Activated CD4-positive, alpha-beta T cell treated with anti-CD3 and anti-CD28 coated beads for 36 hours (primary cell): ENCODE measurements at regions of chr1 and their contacts with region 1.

Region 1: GRCh38 chr1:167599957-167600581 is 30.0 kb upstream of the RCSD1 start:
- DNase-seq: peak; percentile 63
- ATAC-seq: peak; percentile 88
- H3K4me3 Mint-ChIP-seq: peak overlapping the region; percentile 21
- H3K27ac Mint-ChIP-seq: peak overlapping the region; percentile 89
- H3K4me1 Mint-ChIP-seq: peaks cover 37% of the 10 kb centered on the region
- H3K27me3 Mint-ChIP-seq: no peaks in the 10 kb centered on the region

Region 2: GRCh38 chr1:167617153-167618147 is 17.4 kb after region 1 on chr1:
- CTCF ChIA-PET with region 1: interaction called, 12 read pairs
- POLR2A ChIA-PET with region 1: interaction called, 4 read pairs
- intact Hi-C with region 1: loop called in 1 of 2 experiments (anchors 1 kb)
- DNase-seq: no peak
- ATAC-seq: peak; percentile 75
- H3K4me3 Mint-ChIP-seq: peak overlapping the region; percentile 66
- H3K27ac Mint-ChIP-seq: peak overlapping the region; percentile 92
- H3K4me1 Mint-ChIP-seq: peaks cover 54% of the 10 kb centered on the region
- H3K27me3 Mint-ChIP-seq: no peaks in the 10 kb centered on the region

Region 3: GRCh38 chr1:167638064-167638463 is 38.0 kb after region 1 on chr1:
- CTCF ChIA-PET with region 1: interaction called, 27 read pairs
- POLR2A ChIA-PET with region 1: interaction called, 3 read pairs
- intact Hi-C with region 1: loop called (anchors 1 kb)
- DNase-seq: no peak
- ATAC-seq: no peak
- H3K4me3 Mint-ChIP-seq: no peak overlapping the region
- H3K27ac Mint-ChIP-seq: peak overlapping the region; percentile 93
- H3K4me1 Mint-ChIP-seq: peaks cover 95% of the 10 kb centered on the region
- H3K27me3 Mint-ChIP-seq: no peaks in the 10 kb centered on the region

Region 4: DNA sequence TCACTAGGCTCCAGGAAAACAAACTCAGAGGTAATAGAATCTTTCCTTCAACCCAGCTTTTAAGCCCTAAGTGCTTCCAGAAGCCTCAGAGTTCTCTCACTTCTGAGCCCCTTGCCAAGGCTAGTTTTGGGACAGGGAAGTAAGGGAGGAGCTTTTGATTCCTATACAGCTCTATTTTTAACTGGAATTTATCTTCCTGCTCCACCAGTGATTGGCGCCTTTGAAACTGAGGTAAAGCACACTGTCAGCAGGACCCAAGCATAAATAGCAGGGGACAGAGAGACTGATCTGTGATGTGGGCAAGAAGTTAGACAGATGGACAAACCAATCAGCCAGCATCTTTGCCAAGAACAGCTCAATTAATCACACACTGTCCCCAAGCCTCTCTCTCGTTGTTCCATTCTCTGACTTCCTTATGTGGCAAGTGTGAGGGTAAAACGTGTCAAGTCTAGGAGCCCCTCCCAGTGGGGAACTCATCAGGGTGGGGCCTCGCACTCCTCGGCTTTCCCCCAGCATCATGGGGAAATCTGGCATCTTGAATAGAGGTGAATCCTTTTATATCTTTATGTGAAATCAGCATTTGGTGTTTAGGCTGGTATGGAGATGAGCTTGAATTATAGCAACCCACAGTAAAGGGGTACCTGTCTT is 81.5 kb after region 1 on chr1:
- CTCF ChIA-PET with region 1: interaction called, 135 read pairs
- POLR2A ChIA-PET with region 1: no interaction called
- intact Hi-C with region 1: no loop called
- DNase-seq: no peak
- ATAC-seq: no peak
- H3K4me3 Mint-ChIP-seq: no peak overlapping the region
- H3K27ac Mint-ChIP-seq: peak overlapping the region; percentile 61
- H3K4me1 Mint-ChIP-seq: peaks cover 6% of the 10 kb centered on the region
- H3K27me3 Mint-ChIP-seq: no peaks in the 10 kb centered on the region

Region 5: DNA sequence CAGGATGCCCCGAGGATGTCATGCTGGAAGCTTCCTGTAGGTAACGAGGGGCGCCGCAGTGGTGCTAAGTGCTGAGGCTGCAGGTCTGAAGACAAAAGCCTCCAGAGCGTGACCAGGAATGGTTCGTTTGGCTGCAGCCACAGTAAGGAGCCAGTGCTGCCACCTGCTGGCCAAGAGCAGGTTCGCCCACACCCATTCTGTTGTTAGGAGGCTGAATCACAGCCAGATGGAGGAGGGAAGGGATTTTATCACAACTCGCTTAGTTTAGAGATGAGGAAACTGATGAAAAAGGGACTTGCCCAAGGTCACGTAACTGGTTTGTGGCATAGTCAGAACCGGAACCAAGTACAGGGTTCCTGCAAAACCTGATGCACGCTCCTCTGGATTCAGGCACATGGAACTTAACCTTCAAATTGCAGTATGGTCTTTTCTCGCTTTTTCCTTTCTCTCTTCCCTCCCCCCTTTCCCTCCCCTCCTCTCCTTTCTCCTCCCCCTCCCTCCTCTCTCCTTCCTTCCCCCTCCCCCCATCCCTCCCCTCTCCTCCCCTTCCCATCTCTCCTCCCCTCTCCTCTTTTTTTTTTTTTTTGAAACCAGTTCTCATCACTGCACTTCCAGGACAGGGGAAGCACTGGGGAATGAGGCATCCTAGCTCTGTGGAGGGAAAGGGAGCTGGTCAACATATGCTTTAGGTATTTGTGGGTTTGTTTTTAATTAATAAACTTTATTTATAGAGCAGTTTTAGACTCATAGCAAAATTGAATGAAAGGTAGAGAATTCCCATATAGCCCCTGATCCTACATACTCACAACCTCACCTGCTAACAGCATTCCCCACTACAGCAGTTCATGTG is 203.5 kb after region 1 on chr1:
- CTCF ChIA-PET with region 1: interaction called, 3 read pairs
- POLR2A ChIA-PET with region 1: no interaction called
- intact Hi-C with region 1: loop called (anchors 1 kb)
- DNase-seq: peak; percentile 96
- ATAC-seq: peak; percentile 94
- H3K4me3 Mint-ChIP-seq: peak overlapping the region; percentile 64
- H3K27ac Mint-ChIP-seq: peak overlapping the region; percentile 97
- H3K4me1 Mint-ChIP-seq: peaks cover 24% of the 10 kb centered on the region
- H3K27me3 Mint-ChIP-seq: peaks cover under 1% of the 10 kb centered on the region

Region 6: GRCh38 chr1:168082008-168082876 is 482.2 kb after region 1 on chr1:
- CTCF ChIA-PET with region 1: interaction called, 3 read pairs
- POLR2A ChIA-PET with region 1: no interaction called
- intact Hi-C with region 1: loop called in 1 of 2 experiments (anchors 5 kb)
- DNase-seq: peak; percentile 84
- ATAC-seq: peak; percentile 92
- H3K4me3 Mint-ChIP-seq: no peak overlapping the region
- H3K27ac Mint-ChIP-seq: peak overlapping the region; percentile 45
- H3K4me1 Mint-ChIP-seq: no peaks in the 10 kb centered on the region
- H3K27me3 Mint-ChIP-seq: no peaks in the 10 kb centered on the region